ENCODE measurements at regions of chr10 and their contacts with region 1.

Region 1: DNA sequence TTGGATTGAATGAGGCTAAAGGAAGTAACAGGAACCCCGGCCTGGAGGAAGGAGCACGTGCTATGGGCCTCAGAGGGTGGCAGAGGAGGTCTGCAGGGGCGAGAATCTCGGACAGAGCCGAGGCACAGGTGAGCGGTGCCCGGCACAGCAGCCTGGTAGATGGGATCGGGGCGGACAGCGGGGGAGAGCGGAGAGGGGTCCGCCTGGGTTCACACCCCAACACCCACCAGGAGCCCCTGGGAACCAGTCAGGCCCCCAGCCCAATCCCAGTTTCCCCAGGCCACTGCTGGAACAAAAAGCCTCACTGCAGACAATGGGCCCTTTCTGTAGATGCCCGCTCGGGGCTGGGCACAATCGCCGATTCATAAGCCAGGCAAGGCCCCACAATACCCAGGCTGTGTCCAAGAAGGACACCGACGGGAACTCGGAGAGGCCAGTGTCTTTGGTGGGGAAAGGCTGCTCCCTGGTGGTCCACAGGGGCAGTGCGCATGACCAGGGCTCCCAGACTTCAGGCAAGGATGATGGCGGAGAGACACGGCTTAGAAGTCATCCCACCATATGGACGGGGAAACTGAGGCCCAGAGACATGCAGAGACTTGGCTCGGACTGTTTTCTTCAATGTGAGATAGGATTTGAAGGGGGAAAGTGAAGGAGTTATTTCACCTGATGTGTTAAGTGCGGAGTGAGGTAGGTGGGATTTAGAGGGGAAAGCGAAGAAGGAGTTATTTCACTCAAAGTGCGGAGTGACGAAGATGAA is 106.9 kb upstream of the GPR26 start:
- DNase-seq: peak; percentile 60 to 86 (median 75)
- H3K4me3 ChIP-seq: no peak overlapping the region
- H3K27ac ChIP-seq: no peak overlapping the region
- H3K4me1 ChIP-seq: no peaks in the 10 kb centered on the region
- H3K27me3 ChIP-seq: no peaks in the 10 kb centered on the region
- CTCF ChIP-seq: peak; percentile 90 to 99 (median 97)
- POLR2A ChIP-seq: no peak

Region 2: GRCh38 chr10:122446668-122447423 is 1112.4 kb before region 1 on chr10:
- intact Hi-C with region 1: no loop called
- DNase-seq: no peak
- H3K4me3 ChIP-seq: no peak overlapping the region
- H3K27ac ChIP-seq: no peak overlapping the region
- H3K4me1 ChIP-seq: no peaks in the 10 kb centered on the region
- H3K27me3 ChIP-seq: no peaks in the 10 kb centered on the region
- CTCF ChIP-seq: no peak
- POLR2A ChIP-seq: no peak

Region 3: DNA sequence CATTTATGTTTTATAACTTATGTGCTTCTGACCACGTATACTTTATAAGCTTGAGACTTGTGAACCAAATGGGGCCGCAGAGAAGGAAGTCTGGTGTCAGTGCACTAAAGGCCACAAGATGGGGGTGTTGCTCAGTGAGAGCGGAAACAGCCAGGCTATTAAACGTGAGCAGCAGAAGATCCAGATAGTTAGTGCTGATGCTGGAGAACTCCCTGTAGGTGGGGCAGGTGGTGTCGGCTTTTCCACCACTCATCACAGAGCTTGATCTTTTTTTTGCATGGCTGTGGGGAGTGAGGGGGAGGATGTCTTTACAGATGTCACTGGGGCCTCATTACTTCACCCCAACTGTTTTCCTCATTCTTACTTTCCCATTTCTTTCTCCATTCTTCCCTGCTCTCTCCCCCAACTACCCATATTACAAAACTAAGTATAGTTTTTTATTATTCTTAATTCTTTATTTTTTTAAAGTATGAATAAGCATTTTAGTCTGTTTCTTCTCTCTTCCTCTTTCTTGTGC is 515.8 kb before region 1 on chr10:
- intact Hi-C with region 1: loop called (anchors 5 to 10 kb)
- DNase-seq: peak; percentile 25 to 72 (median 50)
- H3K4me3 ChIP-seq: no peak overlapping the region
- H3K27ac ChIP-seq: no peak overlapping the region
- H3K4me1 ChIP-seq: no peaks in the 10 kb centered on the region
- H3K27me3 ChIP-seq: no peaks in the 10 kb centered on the region
- CTCF ChIP-seq: peak; percentile 32 to 67 (median 60)
- POLR2A ChIP-seq: no peak

Region 4: GRCh38 chr10:123132576-123133477 is 426.4 kb before region 1 on chr10:
- intact Hi-C with region 1: loop called (anchors 2 to 5 kb)
- DNase-seq: peak; percentile 75 to 93 (median 88)
- H3K4me3 ChIP-seq: no peak overlapping the region
- H3K27ac ChIP-seq: no peak overlapping the region
- H3K4me1 ChIP-seq: peaks cover 20 to 44% of the 10 kb centered on the region in 2 donors
- H3K27me3 ChIP-seq: peaks cover 83% of the 10 kb centered on the region
- CTCF ChIP-seq: peak; percentile 80 to 94 (median 88)
- POLR2A ChIP-seq: no peak

Region 5: DNA sequence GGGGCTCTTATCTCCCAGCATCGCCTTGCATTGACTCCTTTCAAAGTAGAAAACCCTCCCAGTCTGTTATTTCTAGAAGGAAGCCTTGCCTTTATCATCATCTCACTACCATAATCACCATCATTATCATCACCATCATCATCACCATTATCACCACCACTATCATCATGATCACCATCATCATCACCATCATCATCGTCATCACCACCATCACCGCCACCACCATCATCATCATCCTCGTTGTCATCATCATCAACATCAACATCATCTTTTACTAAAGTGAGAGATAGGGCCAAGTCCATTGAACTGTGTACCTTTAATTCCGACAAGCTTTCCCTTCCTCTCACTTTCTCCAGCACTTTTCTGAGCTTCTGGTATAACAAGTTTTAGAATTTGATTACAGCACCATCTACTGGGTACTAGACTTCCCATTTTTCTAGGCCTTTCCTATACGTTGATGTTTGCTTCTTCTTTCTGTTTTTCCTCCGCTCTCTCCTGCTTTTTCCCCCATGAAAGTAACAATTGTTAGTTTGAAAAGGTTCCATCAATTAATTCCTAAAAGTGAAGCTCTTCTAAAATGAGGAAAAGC is 178.7 kb before region 1 on chr10:
- intact Hi-C with region 1: loop called in 1 of 2 experiments (anchors 10 kb)
- DNase-seq: no peak
- H3K4me3 ChIP-seq: no peak overlapping the region
- H3K27ac ChIP-seq: no peak overlapping the region
- H3K4me1 ChIP-seq: no peaks in the 10 kb centered on the region
- H3K27me3 ChIP-seq: no peaks in the 10 kb centered on the region
- CTCF ChIP-seq: peak; percentile 12 to 59 (median 46)
- POLR2A ChIP-seq: no peak

Region 6: DNA sequence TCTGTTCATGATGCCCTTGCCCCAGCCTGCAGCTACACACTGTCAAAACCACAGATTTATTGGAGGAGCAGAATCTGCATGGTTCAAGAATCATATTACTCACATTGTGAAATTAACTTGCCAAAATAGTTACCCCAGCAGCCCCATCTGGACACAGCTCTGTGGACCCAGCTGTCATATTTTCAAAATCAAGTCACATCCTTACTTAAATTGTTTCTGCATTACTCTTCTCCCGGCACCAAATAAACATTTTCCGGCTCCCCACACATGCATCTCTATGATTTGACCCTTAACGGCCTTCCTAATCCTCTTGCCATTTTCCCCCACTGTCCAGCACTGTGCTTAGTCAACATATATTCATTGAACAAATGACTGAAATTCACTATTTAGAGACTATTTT is 63.1 kb after region 1 on chr10:
- intact Hi-C with region 1: no loop called
- DNase-seq: peak in 1 of 7 donors; percentile 4
- H3K4me3 ChIP-seq: no peak overlapping the region
- H3K27ac ChIP-seq: no peak overlapping the region
- H3K4me1 ChIP-seq: no peaks in the 10 kb centered on the region
- H3K27me3 ChIP-seq: no peaks in the 10 kb centered on the region
- CTCF ChIP-seq: no peak
- POLR2A ChIP-seq: no peak

Measured in adrenal gland (tissue), 19 donors.